ENCODE measurements at regions of chr5 and their contacts with region 1.

Region 1: GRCh38 chr5:40570408-40571129 is 109.1 kb upstream of the PTGER4 start:
- DNase-seq: no peak
- ATAC-seq: peak; percentile 72
- H3K4me3 Mint-ChIP-seq: peak overlapping the region; percentile 59
- H3K27ac Mint-ChIP-seq: peak overlapping the region; percentile 64
- H3K4me1 Mint-ChIP-seq: peaks cover 39% of the 10 kb centered on the region
- H3K27me3 Mint-ChIP-seq: no peaks in the 10 kb centered on the region
- CTCF ChIP-seq: no peak

Region 2: DNA sequence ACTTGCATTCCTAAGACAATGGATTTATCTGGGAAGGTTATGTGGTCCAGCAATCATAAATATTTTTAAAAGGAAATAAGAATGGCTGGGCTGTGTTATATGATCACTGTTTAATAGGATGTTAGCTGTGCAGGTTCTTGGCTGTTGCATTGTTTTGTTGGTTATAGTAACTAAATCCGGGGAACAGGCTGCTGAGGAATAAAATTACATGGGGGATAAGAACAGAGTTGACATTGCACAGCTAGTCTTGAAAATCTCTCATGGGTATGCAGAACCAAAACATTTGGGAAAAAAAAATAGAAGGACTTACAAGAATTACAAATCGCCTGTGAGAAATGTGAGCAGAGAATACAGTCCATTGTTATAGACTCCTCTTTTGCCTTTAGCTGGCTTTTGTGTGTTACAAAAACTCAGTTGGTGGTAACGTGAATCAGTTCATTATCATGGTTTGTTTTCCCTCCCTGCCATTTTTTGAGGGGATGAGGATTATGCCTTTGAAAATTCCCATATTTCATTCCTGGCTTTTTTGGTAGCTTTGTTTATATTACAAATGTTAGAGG is 770.4 kb before region 1 on chr5:
- CTCF ChIA-PET with region 1: no interaction called
- POLR2A ChIA-PET with region 1: no interaction called
- intact Hi-C with region 1: no loop called
- DNase-seq: no peak
- ATAC-seq: no peak
- H3K4me3 Mint-ChIP-seq: no peak overlapping the region
- H3K27ac Mint-ChIP-seq: no peak overlapping the region
- H3K4me1 Mint-ChIP-seq: no peaks in the 10 kb centered on the region
- H3K27me3 Mint-ChIP-seq: no peaks in the 10 kb centered on the region
- CTCF ChIP-seq: no peak

Region 3: DNA sequence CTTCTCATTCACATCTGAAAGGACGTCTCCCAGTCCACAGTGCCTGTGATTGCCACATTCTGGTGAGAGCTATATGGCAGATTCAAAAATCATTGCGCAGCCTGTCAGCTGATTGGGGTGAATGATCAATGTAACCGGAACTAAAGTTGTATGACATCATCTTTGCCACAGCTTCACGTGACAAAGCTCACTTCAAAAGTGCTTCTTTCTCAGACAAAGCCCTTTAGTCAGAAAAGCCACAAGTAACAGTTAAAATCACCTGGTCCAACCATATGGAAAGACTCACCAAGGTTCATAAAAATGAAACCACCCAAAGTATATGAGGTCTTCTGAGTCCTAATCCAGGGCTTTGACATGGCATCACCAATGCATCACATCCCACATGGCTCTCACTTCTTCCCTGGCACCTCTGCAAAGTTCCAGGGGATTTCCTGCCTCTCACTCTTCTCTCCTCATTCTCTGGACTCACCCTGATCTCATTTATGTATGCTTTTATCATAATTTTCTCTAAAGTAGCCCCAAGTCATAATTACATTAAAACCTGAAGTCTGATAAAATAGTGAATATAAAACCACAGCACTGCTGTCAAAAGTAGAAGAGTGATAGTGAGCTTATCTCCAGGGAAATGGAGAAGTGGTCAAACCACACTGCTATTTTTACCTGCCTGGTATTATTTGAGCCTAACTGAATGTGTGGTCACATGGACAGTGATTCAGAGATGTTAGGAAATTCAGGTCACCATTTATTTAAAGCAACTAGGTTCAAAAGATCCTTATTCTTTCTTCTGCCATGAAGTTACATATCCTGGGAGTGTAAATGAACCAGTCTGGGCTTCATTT is 83.9 kb before region 1 on chr5:
- CTCF ChIA-PET with region 1: no interaction called
- POLR2A ChIA-PET with region 1: no interaction called
- intact Hi-C with region 1: no loop called
- DNase-seq: no peak
- ATAC-seq: peak; percentile 38
- H3K4me3 Mint-ChIP-seq: peak overlapping the region; percentile 64
- H3K27ac Mint-ChIP-seq: peak overlapping the region; percentile 87
- H3K4me1 Mint-ChIP-seq: peaks cover 82% of the 10 kb centered on the region
- H3K27me3 Mint-ChIP-seq: no peaks in the 10 kb centered on the region
- CTCF ChIP-seq: no peak

Region 4: DNA sequence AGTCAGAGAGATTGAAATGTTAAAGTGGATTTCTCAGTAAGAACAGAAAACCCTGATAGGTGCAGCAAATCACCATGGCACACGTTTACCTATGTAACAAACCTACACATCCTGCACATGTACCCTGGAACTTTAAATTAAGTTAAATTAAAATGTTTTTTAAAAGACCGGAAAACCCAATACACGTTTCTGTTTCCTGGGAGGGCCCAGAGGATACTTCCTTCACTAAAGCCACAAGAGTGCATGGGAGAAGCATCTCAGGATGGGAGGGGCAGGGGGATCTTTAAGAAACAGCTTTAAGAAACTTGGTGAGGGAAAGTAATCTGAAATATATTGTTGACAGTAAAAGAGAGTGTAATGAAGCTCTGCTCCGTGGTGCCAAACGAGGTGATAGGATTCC is 55.6 kb before region 1 on chr5:
- CTCF ChIA-PET with region 1: no interaction called
- POLR2A ChIA-PET with region 1: no interaction called
- intact Hi-C with region 1: loop called (anchors 5 kb)
- DNase-seq: no peak
- ATAC-seq: no peak
- H3K4me3 Mint-ChIP-seq: no peak overlapping the region
- H3K27ac Mint-ChIP-seq: no peak overlapping the region
- H3K4me1 Mint-ChIP-seq: peaks cover 12% of the 10 kb centered on the region
- H3K27me3 Mint-ChIP-seq: no peaks in the 10 kb centered on the region
- CTCF ChIP-seq: no peak

Region 5: GRCh38 chr5:41156739-41157138 is 586.2 kb after region 1 on chr5:
- CTCF ChIA-PET with region 1: no interaction called
- POLR2A ChIA-PET with region 1: no interaction called
- intact Hi-C with region 1: no loop called
- DNase-seq: no peak
- ATAC-seq: no peak
- H3K4me3 Mint-ChIP-seq: no peak overlapping the region
- H3K27ac Mint-ChIP-seq: no peak overlapping the region
- H3K4me1 Mint-ChIP-seq: no peaks in the 10 kb centered on the region
- H3K27me3 Mint-ChIP-seq: no peaks in the 10 kb centered on the region
- CTCF ChIP-seq: no peak

Measured in activated B cell treated with CpG ODN at 0.5 μM for 24 hours (primary cell).